ENCODE measurements at regions of chr11 and their contacts with region 1.

Region 1: GRCh38 chr11:34149786-34150185 is 44.4 kb downstream of the NAT10 start:
- DNase-seq: peak in 1 of 2 donors; percentile 59
- ATAC-seq: peak; percentile 46 to 76 (median 63)
- H3K4me3 ChIP-seq: no peak overlapping the region
- H3K27ac ChIP-seq: no peak overlapping the region
- H3K4me1 ChIP-seq: no peaks in the 10 kb centered on the region
- H3K27me3 ChIP-seq: no peaks in the 10 kb centered on the region
- CTCF ChIP-seq: peak; percentile 24

Region 2: GRCh38 chr11:33842236-33842915 is 307.4 kb before region 1 on chr11:
- intact Hi-C with region 1: loop called in 1 of 2 experiments (anchors 10 kb)
- DNase-seq: no peak
- ATAC-seq: no peak
- H3K4me3 ChIP-seq: no peak overlapping the region
- H3K27ac ChIP-seq: no peak overlapping the region
- H3K4me1 ChIP-seq: no peaks in the 10 kb centered on the region
- H3K27me3 ChIP-seq: peaks cover 0 to 7% (median 0%) of the 10 kb centered on the region in 3 donors
- CTCF ChIP-seq: no peak

Region 3: DNA sequence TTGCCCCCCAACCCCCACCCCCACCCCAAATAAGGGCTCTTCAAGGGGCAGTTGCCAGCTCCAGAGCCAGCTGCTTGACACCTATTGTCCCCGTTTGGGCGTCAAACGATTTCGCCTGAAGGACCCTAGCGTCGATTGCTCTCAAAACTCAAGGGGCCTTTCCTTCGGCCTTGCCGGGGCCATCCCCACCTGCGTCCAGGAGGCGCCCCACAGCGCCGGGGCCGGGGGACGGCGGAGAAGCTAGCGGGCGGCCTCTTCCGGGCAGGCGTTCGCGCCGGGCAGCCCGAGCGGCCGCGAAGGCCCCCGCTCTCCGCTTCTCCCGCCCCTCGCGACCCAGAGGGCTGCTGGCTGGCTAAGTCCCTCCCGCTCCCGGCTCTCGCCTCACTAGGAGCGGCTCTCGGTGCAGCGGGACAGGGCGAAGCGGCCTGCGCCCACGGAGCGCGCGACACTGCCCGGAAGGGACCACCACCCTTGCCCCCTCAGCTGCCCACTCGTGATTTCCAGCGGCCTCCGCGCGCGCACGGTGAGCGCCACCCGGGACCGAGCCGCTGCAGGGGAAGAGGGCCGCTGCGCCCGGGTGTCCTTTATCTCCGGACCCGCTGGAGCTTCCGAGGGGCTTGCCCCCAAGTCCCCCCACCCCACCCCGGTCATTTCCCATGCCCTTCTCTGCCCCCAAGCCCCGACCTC is 98.3 kb before region 1 on chr11 and contains the start of gene CAPRIN1:
- intact Hi-C with region 1: no loop called
- DNase-seq: peak; percentile 87 to 94
- ATAC-seq: peak; percentile 91 to 92 (median 91)
- H3K4me3 ChIP-seq: peak within 1 kb of the TSS; percentile 92
- H3K27ac ChIP-seq: peak within 1 kb of the TSS; percentile 95
- H3K4me1 ChIP-seq: peaks cover 40% of the 10 kb centered on the region
- H3K27me3 ChIP-seq: no peaks in the 10 kb centered on the region
- CTCF ChIP-seq: no peak
- total RNA-seq, gene CAPRIN1: 70.3 to 122 (median 109) TPM

Region 4: GRCh38 chr11:35815556-35816315 is 1666.0 kb after region 1 on chr11:
- intact Hi-C with region 1: loop called in 1 of 2 experiments (anchors 10 kb)
- DNase-seq: no peak
- ATAC-seq: peak in 3 of 4 donors; percentile 36 to 49 (median 39)
- H3K4me3 ChIP-seq: no peak overlapping the region
- H3K27ac ChIP-seq: no peak overlapping the region
- H3K4me1 ChIP-seq: peaks cover 30% of the 10 kb centered on the region
- H3K27me3 ChIP-seq: no peaks in the 10 kb centered on the region
- CTCF ChIP-seq: no peak

Measured in psoas muscle (tissue), 8 donors.